ENCODE measurements at regions of chr21 and their contacts with region 1.

Region 1: GRCh38 chr21:15210235-15210739 is 145.5 kb upstream of the NRIP1 start:
- H3K4me3 Mint-ChIP-seq: no peak overlapping the region
- H3K27ac Mint-ChIP-seq: no peak overlapping the region
- H3K4me1 Mint-ChIP-seq: peaks cover 72% of the 10 kb centered on the region
- H3K27me3 Mint-ChIP-seq: peaks cover 48% of the 10 kb centered on the region

Region 2: GRCh38 chr21:14012409-14012808 is 1197.9 kb before region 1 on chr21:
- intact Hi-C with region 1: no loop called
- H3K4me3 Mint-ChIP-seq: no peak overlapping the region
- H3K27ac Mint-ChIP-seq: no peak overlapping the region
- H3K4me1 Mint-ChIP-seq: no peaks in the 10 kb centered on the region
- H3K27me3 Mint-ChIP-seq: no peaks in the 10 kb centered on the region

Region 3: DNA sequence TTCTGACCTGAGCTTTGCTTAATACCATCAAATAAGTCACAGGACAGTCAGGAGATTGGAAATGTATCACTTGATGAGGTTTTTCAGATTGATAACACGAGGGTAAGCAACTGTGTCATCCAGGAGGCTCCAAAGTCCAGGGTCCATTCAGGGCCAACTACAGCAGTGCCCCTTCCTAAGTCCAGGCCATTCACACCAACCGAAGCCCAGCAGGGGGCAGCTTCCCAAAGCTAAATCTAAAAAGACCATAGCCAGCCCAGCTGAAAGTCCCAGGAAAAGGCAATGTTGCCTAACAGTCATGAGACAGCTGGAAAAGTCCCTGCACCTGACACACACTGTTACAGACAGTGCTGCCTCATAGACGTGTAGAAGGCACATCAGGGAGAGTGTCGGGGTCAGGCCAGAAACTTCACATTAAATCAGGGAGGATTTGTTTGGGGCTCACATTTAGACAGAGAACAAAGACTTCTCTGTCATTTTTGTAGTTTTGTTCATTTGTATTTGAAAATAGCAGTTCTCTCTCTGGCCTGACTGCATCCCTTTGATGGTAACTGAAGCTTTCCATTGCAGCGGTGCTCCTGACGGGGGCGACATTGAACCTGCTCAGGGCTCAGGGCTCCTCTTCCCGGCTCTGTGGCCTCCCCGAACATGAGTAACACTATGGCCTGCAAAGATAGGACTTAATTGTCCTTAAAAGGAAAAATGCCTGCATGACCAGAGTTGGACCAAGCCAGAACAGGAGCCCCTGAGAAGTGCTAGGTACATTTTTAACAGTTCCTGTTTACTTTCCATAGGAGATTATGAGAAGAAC is 345.9 kb before region 1 on chr21:
- intact Hi-C with region 1: loop called (anchors 5 kb)
- H3K4me3 Mint-ChIP-seq: no peak overlapping the region
- H3K27ac Mint-ChIP-seq: peak overlapping the region; percentile 32
- H3K4me1 Mint-ChIP-seq: peaks cover 55% of the 10 kb centered on the region
- H3K27me3 Mint-ChIP-seq: no peaks in the 10 kb centered on the region

Region 4: GRCh38 chr21:15437883-15438282 is 227.6 kb after region 1 on chr21:
- intact Hi-C with region 1: loop called (anchors 5 kb)
- H3K4me3 Mint-ChIP-seq: no peak overlapping the region
- H3K27ac Mint-ChIP-seq: no peak overlapping the region
- H3K4me1 Mint-ChIP-seq: peaks cover 9% of the 10 kb centered on the region
- H3K27me3 Mint-ChIP-seq: no peaks in the 10 kb centered on the region

Measured in dendritic cell treated with granulocyte-macrophage colony-stimulating factor and Interleukin-4, amounts not matched to agents 40 ng/mL and 50 ng/mL, for 4 days (primary cell).